ENCODE measurements at regions of chr22 and their contacts with region 1.

Region 1: DNA sequence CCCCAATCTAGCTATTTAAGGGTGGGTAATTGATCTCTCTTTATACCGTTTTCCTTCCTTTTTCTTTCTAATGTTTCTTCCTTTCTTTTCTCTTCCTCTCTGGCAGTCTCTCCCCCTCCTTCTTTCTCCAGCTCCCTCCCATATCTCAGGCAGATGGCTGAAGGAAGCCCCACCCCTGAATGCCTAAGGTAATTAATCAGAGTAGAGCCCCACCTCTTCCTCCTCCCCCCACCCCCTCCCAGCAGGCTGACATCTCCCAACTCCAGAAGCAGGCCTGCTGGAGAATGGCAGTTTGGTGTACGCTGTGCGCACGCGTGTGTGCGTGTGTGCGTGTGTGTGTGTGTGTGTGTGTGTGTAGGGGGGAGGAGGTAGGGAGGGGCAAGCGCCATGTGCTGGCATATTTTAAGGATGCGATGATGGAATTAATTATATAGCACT is 122.6 kb downstream of the APOL5 start:
- DNase-seq: no peak
- ATAC-seq: no peak
- H3K4me3 Mint-ChIP-seq: no peak overlapping the region
- H3K27ac Mint-ChIP-seq: no peak overlapping the region
- H3K4me1 Mint-ChIP-seq: peaks cover 5% of the 10 kb centered on the region
- H3K27me3 Mint-ChIP-seq: peaks cover 30% of the 10 kb centered on the region
- CTCF ChIP-seq: no peak

Region 2: DNA sequence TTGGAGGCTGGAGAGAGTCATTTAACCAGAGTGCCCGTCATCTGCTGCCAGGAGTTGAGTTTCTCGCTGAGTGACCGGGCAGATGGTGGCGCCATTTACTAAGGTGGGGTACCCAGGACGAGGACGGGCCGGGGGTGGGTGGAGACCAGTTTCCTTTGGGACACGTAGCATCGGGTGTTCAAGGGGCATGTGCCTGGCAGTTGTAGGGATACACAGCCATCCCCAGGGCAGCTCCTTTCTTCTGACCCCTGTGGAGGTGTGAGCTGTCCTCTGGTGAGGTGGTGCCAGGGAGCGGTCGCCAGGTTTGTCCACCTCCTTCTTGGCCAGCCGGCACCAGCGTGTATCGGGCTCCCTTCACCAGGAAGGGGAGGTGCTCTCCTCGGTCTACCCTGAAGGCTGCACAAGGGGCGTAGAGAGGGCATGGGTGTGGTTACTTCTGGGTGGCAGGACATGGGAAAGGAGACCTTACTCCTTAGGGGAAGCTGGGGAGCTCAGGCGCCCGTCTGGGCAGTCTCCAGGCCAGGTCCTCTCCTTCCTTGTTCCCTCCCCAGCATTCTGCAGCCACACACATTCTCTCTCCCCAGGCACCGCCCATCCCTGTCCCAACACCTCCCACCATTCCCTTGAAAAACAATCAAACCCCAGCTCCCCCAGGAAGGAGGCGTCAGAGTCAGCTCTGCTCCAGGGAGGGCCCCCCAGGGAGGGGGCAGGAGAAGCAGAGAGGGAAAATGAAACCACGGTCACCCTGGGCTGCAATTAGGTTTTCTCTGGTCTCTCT is 212.9 kb before region 1 on chr22:
- CTCF ChIA-PET with region 1: no interaction called
- POLR2A ChIA-PET with region 1: no interaction called
- intact Hi-C with region 1: loop called (anchors 5 kb)
- DNase-seq: no peak
- ATAC-seq: no peak
- H3K4me3 Mint-ChIP-seq: no peak overlapping the region
- H3K27ac Mint-ChIP-seq: no peak overlapping the region
- H3K4me1 Mint-ChIP-seq: peaks cover 19% of the 10 kb centered on the region
- H3K27me3 Mint-ChIP-seq: peaks cover 43% of the 10 kb centered on the region
- CTCF ChIP-seq: no peak